Dorsolateral prefrontal cortex (tissue), 120 donors: ENCODE measurements at regions of chr9 and their contacts with region 1.

Region 1: DNA sequence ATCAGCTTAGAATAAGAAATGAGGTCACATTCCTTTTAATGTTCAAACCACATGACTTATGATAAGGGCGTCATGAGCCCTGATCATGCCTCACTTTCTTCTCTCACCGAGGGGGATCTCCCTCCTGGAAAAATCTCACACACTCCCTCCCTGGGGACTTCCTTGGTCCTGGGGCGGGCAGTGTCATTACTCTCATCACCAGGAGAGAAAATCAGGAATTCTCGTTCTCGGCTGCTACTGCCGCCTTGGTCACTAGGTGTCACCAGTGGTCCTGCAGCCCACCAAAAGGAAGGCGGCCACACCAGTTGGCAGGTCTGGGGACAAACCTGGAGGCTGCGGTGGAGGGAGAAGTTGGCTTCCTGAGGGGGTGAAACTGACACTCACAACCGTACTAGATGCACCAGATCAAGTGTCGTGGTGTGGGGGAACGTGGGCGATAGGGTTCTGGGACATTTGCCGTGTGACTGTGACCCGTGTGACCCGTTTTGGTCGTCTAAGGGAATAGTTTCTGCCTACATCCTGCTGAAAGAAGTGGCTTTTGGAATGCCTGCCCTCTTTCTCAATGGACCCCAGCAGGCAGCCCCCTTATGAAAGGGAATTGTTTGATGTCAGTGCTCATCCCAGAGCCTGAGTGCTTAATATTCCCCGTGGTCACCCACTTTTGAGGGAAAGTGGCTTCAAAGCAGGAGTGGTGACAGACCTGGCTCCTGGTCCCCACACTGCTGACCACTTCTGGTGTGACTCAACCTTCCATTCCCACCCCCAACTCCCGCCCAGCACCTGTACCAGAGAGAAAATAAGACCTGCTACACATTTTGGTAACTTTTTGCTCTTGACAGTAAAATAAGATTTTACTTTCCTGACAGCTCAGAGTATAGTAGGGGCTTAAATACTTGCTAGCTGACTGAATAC is 63.2 kb downstream of the ACER2 start:
- DNase-seq: peak; percentile 61 to 85 (median 82)
- H3K4me3 ChIP-seq: peak overlapping the region in 24 of 59 donors; percentile 2 to 39 (median 18)
- H3K27ac ChIP-seq: peak overlapping the region; percentile 51 to 98 (median 92)
- H3K27me3 ChIP-seq: no peaks in the 10 kb centered on the region
- CTCF ChIP-seq: peak; percentile 38 to 94 (median 84)

Region 2: GRCh38 chr9:19788614-19789271 is 316.8 kb after region 1 on chr9 and contains the start of gene SLC24A2:
- intact Hi-C with region 1: loop called in 1 of 2 experiments (anchors 5 kb)
- DNase-seq: peak; percentile 28 to 86 (median 70)
- H3K4me3 ChIP-seq: peak within 1 kb of the TSS; percentile 53 to 89 (median 77)
- H3K27ac ChIP-seq: peak within 1 kb of the TSS; percentile 60 to 98 (median 95)
- H3K27me3 ChIP-seq: peaks cover 0 to 12% (median 0%) of the 10 kb centered on the region in 45 donors
- CTCF ChIP-seq: peak in 10 of 56 donors; percentile 5 to 41 (median 13)
- total RNA-seq, gene SLC24A2: 72.9 to 391 (median 239) TPM